ENCODE measurements at regions of chr16 and their contacts with region 1.

Region 1: DNA sequence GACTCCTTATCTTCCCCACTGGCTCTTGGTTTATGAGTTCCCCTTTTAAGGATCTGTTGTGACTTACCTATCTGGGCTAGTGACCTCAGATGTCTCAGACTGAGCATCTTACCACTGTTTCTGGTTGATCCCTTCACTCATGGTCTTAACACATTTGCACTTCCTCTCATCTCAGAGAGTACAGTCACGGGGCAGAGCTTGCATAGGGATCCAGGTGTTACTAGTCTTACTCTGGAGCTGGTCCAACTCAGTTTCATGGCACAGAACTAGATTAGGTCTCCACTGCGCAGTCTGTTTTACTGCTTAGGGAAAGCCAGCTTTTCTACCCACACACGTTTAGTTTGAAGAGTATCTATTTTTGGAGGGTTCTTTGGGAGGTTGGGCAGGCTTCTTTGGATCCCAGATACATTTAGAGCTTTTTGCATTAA is 10.2 kb downstream of the GABARAPL2 start:
- DNase-seq: peak; percentile 51
- CTCF ChIP-seq: no peak

Region 2: DNA sequence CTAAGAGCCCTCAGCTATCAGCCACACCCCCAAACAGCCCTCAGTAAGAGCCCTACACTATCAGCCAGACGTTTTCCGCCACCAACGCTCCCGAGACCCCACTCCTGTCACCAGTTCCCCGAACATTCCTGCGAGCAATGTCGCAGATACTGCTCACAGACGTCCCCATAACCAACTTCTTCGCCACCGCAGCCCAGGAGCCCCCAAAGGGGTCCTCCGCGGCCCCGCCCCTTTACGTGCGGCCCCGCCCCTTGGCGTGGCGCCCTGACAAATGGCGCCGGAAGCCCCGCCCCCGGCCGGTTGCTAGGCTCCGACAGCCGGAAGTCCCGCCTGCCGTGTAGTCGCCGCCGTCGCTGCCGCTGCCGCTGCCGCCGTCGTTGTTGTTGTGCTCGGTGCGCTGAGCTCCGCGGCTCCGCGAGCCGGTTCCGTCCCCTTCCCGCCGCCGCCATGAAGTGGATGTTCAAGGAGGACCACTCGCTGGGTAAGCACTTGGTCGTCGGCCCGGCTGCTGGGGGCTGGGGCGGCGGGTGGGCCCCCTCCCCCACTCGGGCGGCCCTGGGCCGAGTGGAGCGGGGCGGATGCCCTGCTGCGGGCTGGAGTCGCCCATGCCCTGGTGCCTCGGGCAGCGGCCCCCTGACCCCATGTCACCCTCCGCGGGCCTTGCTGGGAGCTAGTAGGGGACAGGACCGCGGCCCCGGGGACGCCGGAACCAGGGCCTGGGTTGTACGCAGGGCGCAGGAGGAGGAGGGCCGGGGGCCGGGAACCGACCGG is 10.2 kb before region 1 on chr16 and contains the start of gene GABARAPL2:
- CTCF ChIA-PET with region 1: interaction called, 20 read pairs
- POLR2A ChIA-PET with region 1: interaction called, 3 read pairs
- DNase-seq: peak; percentile 91
- CTCF ChIP-seq: no peak

Region 3: GRCh38 chr16:75589306-75589705 is 12.9 kb after region 1 on chr16:
- CTCF ChIA-PET with region 1: interaction called, 16 read pairs
- POLR2A ChIA-PET with region 1: no interaction called
- DNase-seq: no peak
- CTCF ChIP-seq: no peak

Region 4: GRCh38 chr16:75667503-75667902 is 91.1 kb after region 1 on chr16:
- CTCF ChIA-PET with region 1: no interaction called
- POLR2A ChIA-PET with region 1: no interaction called
- DNase-seq: no peak
- CTCF ChIP-seq: no peak

Measured in GM10248 (cell line).